IMR-90 (cell line): ENCODE measurements at regions of chr20 and their contacts with region 1.

Region 1: GRCh38 chr20:11807066-11808048 is 110.3 kb upstream of the BTBD3 start:
- DNase-seq: peak; percentile 93
- ATAC-seq: peak; percentile 82
- H3K4me3 ChIP-seq: no peak overlapping the region
- H3K27ac ChIP-seq: peak overlapping the region; percentile 70; the same call in 1 of the 2 replicates
- H3K4me1 ChIP-seq: peaks cover 21% of the 10 kb centered on the region
- H3K27me3 ChIP-seq: no peaks in the 10 kb centered on the region
- CTCF ChIP-seq: no peak
- POLR2A ChIP-seq: no peak
- RAD21 ChIP-seq: no peak

Region 2: DNA sequence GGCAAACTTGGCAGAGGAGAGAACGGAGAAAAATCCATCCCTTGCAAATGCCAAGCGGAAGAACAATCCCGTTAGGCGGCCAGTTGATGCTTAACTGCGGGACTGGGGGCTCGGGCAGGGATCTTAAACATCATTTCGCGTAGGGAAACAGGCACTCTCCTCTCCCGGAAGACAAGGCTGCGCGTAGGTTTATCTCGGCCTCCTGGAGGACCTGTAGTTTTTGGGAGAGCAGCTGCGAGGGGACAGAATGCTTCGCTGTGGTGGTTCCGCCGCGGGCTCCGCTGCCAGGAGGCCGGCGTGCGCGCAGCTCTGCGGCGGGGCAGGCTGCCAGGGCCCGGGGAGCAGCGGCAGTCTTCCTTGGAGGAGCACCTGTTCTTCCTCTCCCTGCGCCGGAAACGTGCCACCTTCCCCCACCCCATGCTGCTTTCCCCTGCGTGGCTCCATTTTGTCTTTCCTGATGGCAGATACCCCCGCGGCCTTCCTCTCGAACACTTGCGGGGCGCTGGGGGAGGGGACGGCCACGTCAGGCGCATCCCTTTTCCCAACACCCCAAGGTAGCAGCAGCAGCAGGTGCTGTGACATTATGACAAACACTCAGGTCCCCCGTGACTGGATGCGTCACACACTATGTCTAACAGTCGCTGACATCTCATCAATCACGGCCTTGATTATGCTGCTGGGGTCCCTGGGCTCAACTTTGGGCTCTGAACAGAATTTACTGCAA is 120.4 kb before region 1 on chr20:
- CTCF ChIA-PET with region 1: no interaction called
- POLR2A ChIA-PET with region 1: no interaction called
- dilution Hi-C with region 1: no loop called
- in situ Hi-C with region 1: no loop called
- intact Hi-C with region 1: loop called (anchors 5 kb)
- DNase-seq: peak; percentile 1
- ATAC-seq: peak; percentile 73
- H3K4me3 ChIP-seq: peak overlapping the region; percentile 13
- H3K27ac ChIP-seq: no peak overlapping the region
- H3K4me1 ChIP-seq: no peaks in the 10 kb centered on the region
- H3K27me3 ChIP-seq: peaks cover 7% of the 10 kb centered on the region
- CTCF ChIP-seq: no peak
- POLR2A ChIP-seq: no peak
- RAD21 ChIP-seq: no peak

Region 3: GRCh38 chr20:11716239-11716944 is 91.0 kb before region 1 on chr20:
- CTCF ChIA-PET with region 1: interaction called, 3 read pairs
- POLR2A ChIA-PET with region 1: no interaction called
- dilution Hi-C with region 1: no loop called
- in situ Hi-C with region 1: no loop called
- intact Hi-C with region 1: loop called (anchors 1 kb)
- DNase-seq: peak; percentile 90
- ATAC-seq: peak; percentile 86
- H3K4me3 ChIP-seq: no peak overlapping the region
- H3K27ac ChIP-seq: peak overlapping the region; percentile 31; the same call in 1 of the 2 replicates
- H3K4me1 ChIP-seq: peaks cover 8% of the 10 kb centered on the region; the same call in 1 of the 2 replicates
- H3K27me3 ChIP-seq: peaks cover 5% of the 10 kb centered on the region; the same call in 1 of the 2 replicates
- CTCF ChIP-seq: peak; percentile 68
- POLR2A ChIP-seq: no peak
- RAD21 ChIP-seq: peak; percentile 36; the same call in 1 of the 2 replicates

Region 4: DNA sequence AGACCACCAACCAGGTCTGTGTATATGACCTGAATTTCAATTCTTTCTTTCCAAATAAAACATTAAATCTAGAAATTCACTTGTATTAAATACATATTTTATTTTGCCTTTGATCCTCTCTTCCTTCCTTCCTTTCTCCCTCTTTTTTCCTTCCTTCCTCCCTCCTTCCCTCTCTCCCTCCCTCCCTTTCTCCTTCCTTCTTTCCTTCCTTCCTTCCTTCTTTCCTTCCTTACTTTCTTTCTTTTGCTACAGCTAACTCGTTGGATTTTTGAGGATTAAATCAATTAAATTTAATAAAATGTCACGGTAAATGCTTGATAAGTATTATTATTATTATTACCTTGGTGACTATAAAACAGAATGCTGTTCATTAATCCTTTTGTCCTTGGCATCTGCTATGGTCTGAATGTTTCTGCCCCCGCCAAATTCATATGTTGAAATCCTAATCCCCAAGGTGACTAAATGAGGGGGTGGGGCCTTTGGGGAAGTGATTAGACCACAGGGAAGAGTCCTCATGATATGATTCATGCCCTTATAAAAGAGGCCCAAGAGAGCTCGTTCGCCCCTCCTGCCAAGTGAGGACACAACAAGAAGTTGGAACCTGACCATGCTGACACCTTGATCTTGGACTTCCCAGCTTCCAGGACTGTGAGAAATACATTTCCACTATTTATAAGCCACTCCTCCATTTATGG is 42.8 kb after region 1 on chr20:
- CTCF ChIA-PET with region 1: no interaction called
- POLR2A ChIA-PET with region 1: no interaction called
- dilution Hi-C with region 1: no loop called
- in situ Hi-C with region 1: no loop called
- intact Hi-C with region 1: loop called (anchors 1 kb)
- DNase-seq: peak; percentile 45
- ATAC-seq: no peak
- H3K4me3 ChIP-seq: no peak overlapping the region
- H3K27ac ChIP-seq: no peak overlapping the region
- H3K4me1 ChIP-seq: peaks cover 22% of the 10 kb centered on the region
- H3K27me3 ChIP-seq: no peaks in the 10 kb centered on the region
- CTCF ChIP-seq: no peak
- POLR2A ChIP-seq: no peak
- RAD21 ChIP-seq: no peak

Region 5: DNA sequence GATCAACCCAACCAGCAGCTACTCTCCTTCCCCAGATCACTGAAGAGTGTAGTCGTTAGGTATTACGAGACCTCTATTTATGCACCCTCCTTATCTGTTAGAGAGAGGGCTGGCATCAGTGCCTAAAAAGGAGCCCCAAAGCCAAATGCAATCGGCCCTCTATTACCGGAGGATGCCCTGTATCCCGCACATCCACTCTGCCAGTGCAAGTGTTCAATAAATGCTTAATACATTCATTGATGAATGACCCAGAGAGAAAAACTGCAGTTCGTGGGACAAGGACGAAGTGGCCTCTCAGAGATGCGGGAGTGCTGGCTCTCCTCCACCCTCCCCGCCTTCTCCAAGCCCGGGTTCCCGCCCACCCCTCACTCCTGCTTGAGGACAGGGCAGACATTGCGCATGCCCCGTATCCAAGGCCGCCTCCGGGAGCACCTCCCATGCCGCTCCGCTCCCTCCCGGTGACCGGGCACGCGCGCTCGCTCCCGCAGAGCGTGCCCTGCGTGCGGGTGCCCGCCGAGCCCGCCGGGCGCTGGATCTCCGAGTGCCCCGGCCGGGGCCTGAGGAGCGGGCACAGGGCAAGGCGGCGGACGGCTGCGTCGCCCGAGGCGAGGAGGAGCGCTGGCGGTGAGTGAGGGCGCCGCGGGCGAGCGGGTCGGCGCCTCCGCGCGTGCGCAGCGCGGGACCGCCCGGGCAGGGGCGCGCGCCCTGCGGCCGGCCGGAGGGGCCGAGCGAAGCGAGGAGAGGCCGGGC is 83.1 kb after region 1 on chr20:
- CTCF ChIA-PET with region 1: no interaction called
- POLR2A ChIA-PET with region 1: no interaction called
- dilution Hi-C with region 1: no loop called
- in situ Hi-C with region 1: loop called (anchors 10 kb)
- intact Hi-C with region 1: loop called (anchors 2 kb)
- DNase-seq: peak; percentile 91
- ATAC-seq: peak; percentile 91
- H3K4me3 ChIP-seq: peak overlapping the region; percentile 85
- H3K27ac ChIP-seq: peak overlapping the region; percentile 79
- H3K4me1 ChIP-seq: peaks cover 3% of the 10 kb centered on the region; the same call in 1 of the 2 replicates
- H3K27me3 ChIP-seq: no peaks in the 10 kb centered on the region
- CTCF ChIP-seq: no peak
- POLR2A ChIP-seq: 0 out of 2 replicates have a peak, but pooled peaks have one; percentile 21
- RAD21 ChIP-seq: no peak

Region 6: DNA sequence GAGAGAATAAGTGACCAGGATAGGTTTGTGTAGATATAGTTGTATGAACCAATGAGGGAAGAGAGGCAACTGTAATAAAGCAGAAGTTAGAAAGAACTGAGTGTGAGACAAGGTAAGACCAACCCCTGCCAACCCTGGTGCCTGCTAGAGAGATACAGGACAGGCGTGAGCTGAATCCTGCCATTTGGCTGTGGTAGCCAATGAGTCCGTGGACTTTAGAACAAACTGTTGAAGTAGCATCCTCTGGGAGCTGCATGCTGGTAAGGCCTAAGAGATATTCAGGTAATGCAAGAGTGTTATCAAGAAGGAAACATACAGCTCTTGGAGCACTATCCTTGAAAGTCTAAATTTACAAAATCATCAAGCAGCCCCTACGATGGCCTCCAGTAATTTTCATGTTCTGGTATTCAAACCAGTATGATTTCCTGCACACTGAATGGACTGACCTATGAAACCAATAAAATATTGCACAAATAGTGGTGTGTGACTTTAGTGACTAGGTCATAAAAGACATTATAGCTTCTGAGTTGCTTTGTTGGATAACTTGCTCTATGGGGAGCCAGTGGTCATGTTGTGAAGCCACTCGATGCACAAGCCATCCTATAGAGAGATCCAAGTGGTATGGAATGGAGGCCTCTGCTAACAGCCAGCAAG is 134.4 kb after region 1 on chr20:
- CTCF ChIA-PET with region 1: no interaction called
- POLR2A ChIA-PET with region 1: no interaction called
- dilution Hi-C with region 1: no loop called
- in situ Hi-C with region 1: no loop called
- intact Hi-C with region 1: no loop called
- DNase-seq: no peak
- ATAC-seq: no peak
- H3K4me3 ChIP-seq: no peak overlapping the region
- H3K27ac ChIP-seq: no peak overlapping the region
- H3K4me1 ChIP-seq: no peaks in the 10 kb centered on the region
- H3K27me3 ChIP-seq: no peaks in the 10 kb centered on the region
- CTCF ChIP-seq: no peak
- POLR2A ChIP-seq: no peak
- RAD21 ChIP-seq: no peak